IMR-90 (cell line): ENCODE measurements at regions of chr5 and their contacts with region 1.

Region 1: GRCh38 chr5:123598028-123598689 is 86.2 kb downstream of the CSNK1G3 start:
- DNase-seq: no peak
- ATAC-seq: no peak
- H3K4me3 ChIP-seq: no peak overlapping the region
- H3K27ac ChIP-seq: no peak overlapping the region
- H3K4me1 ChIP-seq: no peaks in the 10 kb centered on the region
- H3K27me3 ChIP-seq: no peaks in the 10 kb centered on the region
- CTCF ChIP-seq: no peak
- POLR2A ChIP-seq: no peak
- RAD21 ChIP-seq: no peak

Region 2: DNA sequence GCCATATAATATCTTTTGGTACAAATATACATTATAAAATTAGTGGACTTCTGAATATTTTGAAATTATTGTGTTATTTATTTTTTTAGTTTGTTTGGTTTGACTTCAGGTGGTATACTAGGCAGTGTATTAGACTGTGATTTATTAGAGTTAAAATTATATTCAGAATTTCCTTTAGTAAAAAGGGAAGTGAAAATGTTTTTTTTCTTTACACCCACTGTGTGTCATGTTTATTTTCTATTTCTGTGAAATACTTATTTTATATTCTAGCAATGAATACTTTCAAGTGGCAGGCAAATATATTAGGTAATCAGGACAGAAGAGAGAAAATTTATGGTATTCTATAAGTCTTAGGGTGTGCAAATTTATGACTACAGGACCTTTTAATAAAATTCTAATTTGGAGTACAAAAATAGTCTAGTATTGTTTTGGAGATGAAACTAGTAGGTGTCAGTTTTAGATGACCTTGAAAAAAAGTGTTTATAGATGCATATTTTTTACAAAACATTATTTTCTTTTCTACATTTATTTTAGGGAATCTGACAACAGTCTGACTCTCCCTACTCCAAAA is 77.4 kb before region 1 on chr5:
- CTCF ChIA-PET with region 1: no interaction called
- POLR2A ChIA-PET with region 1: no interaction called
- dilution Hi-C with region 1: no loop called
- in situ Hi-C with region 1: no loop called
- intact Hi-C with region 1: loop called (anchors 5 kb)
- DNase-seq: no peak
- ATAC-seq: no peak
- H3K4me3 ChIP-seq: no peak overlapping the region
- H3K27ac ChIP-seq: no peak overlapping the region
- H3K4me1 ChIP-seq: peaks cover 4% of the 10 kb centered on the region
- H3K27me3 ChIP-seq: no peaks in the 10 kb centered on the region
- CTCF ChIP-seq: no peak
- POLR2A ChIP-seq: no peak
- RAD21 ChIP-seq: no peak

Region 3: DNA sequence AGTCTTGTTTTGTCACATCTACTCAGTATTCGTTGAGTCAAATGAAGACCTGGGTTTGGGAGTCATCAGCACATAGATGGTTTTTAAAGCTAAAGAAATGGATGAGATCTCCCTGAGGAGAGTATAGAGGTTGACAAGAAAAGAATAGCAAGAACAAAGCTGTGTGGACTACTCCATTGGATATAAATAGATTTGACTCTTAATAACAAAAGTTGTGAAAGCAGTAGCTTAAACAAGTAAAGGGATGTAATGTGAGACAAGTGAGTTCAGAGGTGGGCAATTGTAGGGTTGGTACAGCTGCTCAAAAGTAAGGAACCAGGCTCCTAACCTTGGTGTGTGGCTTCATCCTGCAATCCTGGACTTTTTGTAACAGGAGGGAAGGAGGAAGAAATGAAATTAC is 36.9 kb before region 1 on chr5:
- CTCF ChIA-PET with region 1: no interaction called
- POLR2A ChIA-PET with region 1: no interaction called
- dilution Hi-C with region 1: no loop called
- in situ Hi-C with region 1: no loop called
- intact Hi-C with region 1: loop called (anchors 5 kb)
- DNase-seq: no peak
- ATAC-seq: no peak
- H3K4me3 ChIP-seq: no peak overlapping the region
- H3K27ac ChIP-seq: no peak overlapping the region
- H3K4me1 ChIP-seq: no peaks in the 10 kb centered on the region; the same call in 1 of the 2 replicates
- H3K27me3 ChIP-seq: no peaks in the 10 kb centered on the region
- CTCF ChIP-seq: no peak
- POLR2A ChIP-seq: no peak
- RAD21 ChIP-seq: no peak

Region 4: GRCh38 chr5:125257057-125257972 is 1659.2 kb after region 1 on chr5:
- CTCF ChIA-PET with region 1: no interaction called
- POLR2A ChIA-PET with region 1: no interaction called
- dilution Hi-C with region 1: no loop called
- in situ Hi-C with region 1: no loop called
- intact Hi-C with region 1: no loop called
- DNase-seq: peak; percentile 7
- ATAC-seq: no peak
- H3K4me3 ChIP-seq: no peak overlapping the region
- H3K27ac ChIP-seq: no peak overlapping the region
- H3K4me1 ChIP-seq: no peaks in the 10 kb centered on the region
- H3K27me3 ChIP-seq: no peaks in the 10 kb centered on the region
- CTCF ChIP-seq: no peak
- POLR2A ChIP-seq: no peak
- RAD21 ChIP-seq: no peak